Naive thymus-derived CD4-positive, alpha-beta T cell (primary cell): ENCODE measurements at regions of chr1 and their contacts with region 1.

Region 1: GRCh38 chr1:154479764-154480421 is 22.1 kb upstream of the TDRD10 start:
- DNase-seq: peak in 8 of 9 donors; percentile 39 to 78 (median 66)
- ATAC-seq: peak; percentile 90
- H3K4me3 ChIP-seq: no peak overlapping the region
- H3K4me3 Mint-ChIP-seq: no peak overlapping the region
- H3K27ac ChIP-seq: no peak overlapping the region
- H3K27ac Mint-ChIP-seq: peak overlapping the region in 1 of 9 donors; percentile 0
- H3K4me1 ChIP-seq: peaks cover 0 to 10% of the 10 kb centered on the region in 2 donors
- H3K4me1 Mint-ChIP-seq: peaks cover 12 to 27% (median 19%) of the 10 kb centered on the region in 7 donors
- H3K27me3 ChIP-seq: no peaks in the 10 kb centered on the region
- H3K27me3 Mint-ChIP-seq: peaks cover 0 to 14% (median 0%) of the 10 kb centered on the region in 5 donors

Region 2: DNA sequence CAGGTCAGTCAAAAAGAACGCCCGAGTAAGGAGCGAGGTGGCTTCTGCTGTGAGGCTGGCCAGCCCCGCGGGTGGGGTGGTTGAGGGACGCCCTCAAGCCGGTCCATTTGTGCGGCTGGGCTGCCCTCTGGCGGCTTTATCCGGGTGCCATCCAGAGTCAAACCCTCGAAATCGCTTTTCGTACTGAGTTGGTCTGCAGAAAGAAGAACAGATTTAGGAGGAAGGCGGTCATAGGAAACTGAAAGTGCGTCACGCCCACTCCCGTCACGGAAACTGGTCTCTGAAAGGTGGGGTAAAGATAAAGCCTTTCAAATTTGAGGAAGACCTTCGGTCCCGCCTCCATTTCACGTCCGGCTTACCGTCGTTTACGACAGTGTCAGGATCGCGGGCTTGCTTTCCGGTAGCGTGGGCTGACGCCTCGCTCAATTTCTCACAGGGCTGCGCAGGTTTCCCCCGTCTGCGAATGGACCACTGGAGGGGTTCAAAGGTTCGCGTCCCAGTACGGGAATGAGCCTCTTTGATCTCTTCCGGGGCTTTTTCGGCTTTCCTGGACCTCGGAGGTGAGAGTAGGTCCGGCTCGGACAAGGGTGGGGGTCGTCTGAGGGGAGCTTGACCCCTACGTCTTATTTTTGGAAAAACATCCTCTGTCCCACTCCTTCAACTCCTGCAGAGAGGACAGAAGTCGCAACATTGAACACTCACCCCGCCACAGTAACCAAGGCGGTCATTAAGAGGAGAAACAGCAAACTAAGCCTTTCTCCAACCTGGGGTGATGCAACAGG is 207.5 kb before region 1 on chr1 and contains the start of gene HAX1:
- CTCF ChIA-PET with region 1: no interaction called
- POLR2A ChIA-PET with region 1: no interaction called
- intact Hi-C with region 1: loop called (anchors 1 kb)
- DNase-seq: peak; percentile 74 to 99 (median 97)
- ATAC-seq: peak; percentile 95
- H3K4me3 ChIP-seq: peak within 1 kb of the TSS; percentile 98
- H3K4me3 Mint-ChIP-seq: peak within 1 kb of the TSS; percentile 94 to 99 (median 97)
- H3K27ac ChIP-seq: peak within 1 kb of the TSS; percentile 92
- H3K27ac Mint-ChIP-seq: peak within 1 kb of the TSS; percentile 97 to 99 (median 99)
- H3K4me1 ChIP-seq: peaks cover 10 to 20% of the 10 kb centered on the region in 2 donors
- H3K4me1 Mint-ChIP-seq: peaks cover 20 to 47% (median 42%) of the 10 kb centered on the region in 7 donors
- H3K27me3 ChIP-seq: no peaks in the 10 kb centered on the region
- H3K27me3 Mint-ChIP-seq: no peaks in the 10 kb centered on the region
- total RNA-seq, gene HAX1: 71.9 to 111 (median 104) TPM

Region 3: GRCh38 chr1:154352581-154353459 is 127.1 kb before region 1 on chr1:
- CTCF ChIA-PET with region 1: interaction called, 12 read pairs
- POLR2A ChIA-PET with region 1: interaction called, 7 read pairs
- intact Hi-C with region 1: loop called (anchors 1 to 5 kb)
- DNase-seq: peak in 8 of 9 donors; percentile 45 to 58 (median 52)
- ATAC-seq: peak; percentile 84
- H3K4me3 ChIP-seq: peak overlapping the region; percentile 79
- H3K4me3 Mint-ChIP-seq: peak overlapping the region; percentile 76 to 98 (median 91)
- H3K27ac ChIP-seq: peak overlapping the region; percentile 74
- H3K27ac Mint-ChIP-seq: peak overlapping the region; percentile 66 to 97 (median 88)
- H3K4me1 ChIP-seq: peaks cover 13 to 32% of the 10 kb centered on the region in 2 donors
- H3K4me1 Mint-ChIP-seq: peaks cover 29 to 64% (median 48%) of the 10 kb centered on the region in 7 donors
- H3K27me3 ChIP-seq: no peaks in the 10 kb centered on the region
- H3K27me3 Mint-ChIP-seq: peaks cover 0 to 2% (median 0%) of the 10 kb centered on the region in 5 donors

Region 4: DNA sequence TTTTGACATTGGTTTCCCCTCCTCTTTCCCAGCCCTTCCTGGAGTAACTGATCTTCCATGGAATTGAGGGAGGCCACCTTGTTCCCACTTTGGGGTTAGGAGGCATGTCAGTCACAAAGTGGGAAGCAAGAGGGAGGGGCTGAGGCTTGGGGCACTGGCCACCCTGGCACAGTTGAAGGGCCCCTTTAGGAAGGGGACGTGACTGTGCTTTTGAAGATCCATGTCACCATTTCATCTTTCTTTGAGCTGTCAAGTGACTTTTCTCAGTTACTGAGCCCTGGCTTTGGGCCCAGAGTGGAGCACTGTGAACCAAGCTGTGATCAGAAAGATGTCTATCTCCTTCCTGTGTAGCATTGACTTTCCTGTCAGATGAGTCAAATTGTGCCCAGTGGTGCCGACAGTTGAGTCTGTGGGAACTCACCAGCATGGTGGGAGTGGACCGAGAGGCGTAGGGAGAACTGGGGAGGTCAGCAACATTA is 16.3 kb before region 1 on chr1:
- CTCF ChIA-PET with region 1: interaction called, 7 read pairs
- POLR2A ChIA-PET with region 1: interaction called, 3 read pairs
- intact Hi-C with region 1: loop called in 1 of 2 experiments (anchors 1 kb)
- DNase-seq: peak in 8 of 9 donors; percentile 50 to 79 (median 70)
- ATAC-seq: peak; percentile 82
- H3K4me3 ChIP-seq: no peak overlapping the region
- H3K4me3 Mint-ChIP-seq: peak overlapping the region; percentile 58 to 96 (median 80)
- H3K27ac ChIP-seq: peak overlapping the region; percentile 78
- H3K27ac Mint-ChIP-seq: peak overlapping the region; percentile 86 to 96 (median 94)
- H3K4me1 ChIP-seq: peaks cover 38 to 78% of the 10 kb centered on the region in 2 donors
- H3K4me1 Mint-ChIP-seq: peaks cover 58 to 94% (median 81%) of the 10 kb centered on the region in 7 donors
- H3K27me3 ChIP-seq: no peaks in the 10 kb centered on the region
- H3K27me3 Mint-ChIP-seq: no peaks in the 10 kb centered on the region

Region 5: GRCh38 chr1:154524881-154525280 is 45.0 kb after region 1 on chr1:
- CTCF ChIA-PET with region 1: no interaction called
- POLR2A ChIA-PET with region 1: no interaction called
- intact Hi-C with region 1: no loop called
- DNase-seq: no peak
- ATAC-seq: no peak
- H3K4me3 ChIP-seq: no peak overlapping the region
- H3K4me3 Mint-ChIP-seq: no peak overlapping the region
- H3K27ac ChIP-seq: no peak overlapping the region
- H3K27ac Mint-ChIP-seq: no peak overlapping the region
- H3K4me1 ChIP-seq: no peaks in the 10 kb centered on the region
- H3K4me1 Mint-ChIP-seq: no peaks in the 10 kb centered on the region
- H3K27me3 ChIP-seq: no peaks in the 10 kb centered on the region
- H3K27me3 Mint-ChIP-seq: peaks cover 0 to 30% (median 7%) of the 10 kb centered on the region in 5 donors

Region 6: GRCh38 chr1:154669464-154670282 is 189.8 kb after region 1 on chr1:
- CTCF ChIA-PET with region 1: interaction called, 4 read pairs
- POLR2A ChIA-PET with region 1: no interaction called
- intact Hi-C with region 1: loop called in 1 of 2 experiments (anchors 1 kb)
- DNase-seq: peak; percentile 40 to 81 (median 73)
- ATAC-seq: peak; percentile 100
- H3K4me3 ChIP-seq: no peak overlapping the region
- H3K4me3 Mint-ChIP-seq: no peak overlapping the region
- H3K27ac ChIP-seq: no peak overlapping the region
- H3K27ac Mint-ChIP-seq: peak overlapping the region in 1 of 9 donors; percentile 30
- H3K4me1 ChIP-seq: no peaks in the 10 kb centered on the region
- H3K4me1 Mint-ChIP-seq: peaks cover 0 to 13% (median 5%) of the 10 kb centered on the region in 7 donors
- H3K27me3 ChIP-seq: no peaks in the 10 kb centered on the region
- H3K27me3 Mint-ChIP-seq: peaks cover 0 to 4% (median 0%) of the 10 kb centered on the region in 5 donors

Region 7: DNA sequence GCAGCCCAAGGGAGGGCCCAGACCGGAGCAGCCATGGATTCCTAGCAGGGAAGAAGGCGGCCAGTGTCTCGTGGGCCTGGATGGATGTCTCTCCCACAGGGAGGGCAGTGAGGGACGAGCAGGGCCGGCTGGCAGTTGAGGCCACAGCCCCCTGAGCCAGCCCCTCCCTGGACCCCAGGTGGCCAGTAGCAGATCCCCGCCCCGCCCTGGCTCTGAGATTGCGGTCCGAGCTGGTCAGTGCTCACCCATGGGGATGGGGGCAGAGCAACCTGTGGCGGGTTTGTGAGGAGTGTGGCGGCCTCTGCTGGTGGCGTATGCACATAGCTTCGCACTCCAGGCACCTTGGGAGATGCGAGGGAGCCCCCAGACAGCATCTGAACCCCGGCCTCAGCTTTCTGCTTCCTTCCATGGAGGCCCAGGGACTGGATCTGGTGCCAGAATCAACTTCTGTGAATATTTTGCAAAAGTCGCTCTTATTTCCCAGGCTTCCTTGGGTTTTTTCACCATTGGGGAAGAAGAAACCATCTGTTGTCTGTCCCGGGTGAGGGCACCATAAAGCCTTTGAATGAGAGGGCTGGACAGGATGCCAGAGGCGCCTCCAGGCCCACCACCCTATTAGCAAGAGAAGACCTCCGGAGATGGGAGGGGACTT is 398.6 kb after region 1 on chr1:
- CTCF ChIA-PET with region 1: interaction called, 7 read pairs
- POLR2A ChIA-PET with region 1: no interaction called
- intact Hi-C with region 1: loop called in 1 of 2 experiments (anchors 1 kb)
- DNase-seq: peak; percentile 43 to 73 (median 60)
- ATAC-seq: peak; percentile 94
- H3K4me3 ChIP-seq: no peak overlapping the region
- H3K4me3 Mint-ChIP-seq: no peak overlapping the region
- H3K27ac ChIP-seq: no peak overlapping the region
- H3K27ac Mint-ChIP-seq: peak overlapping the region in 1 of 9 donors; percentile 56
- H3K4me1 ChIP-seq: no peaks in the 10 kb centered on the region
- H3K4me1 Mint-ChIP-seq: peaks cover 0 to 8% (median 0%) of the 10 kb centered on the region in 7 donors
- H3K27me3 ChIP-seq: no peaks in the 10 kb centered on the region
- H3K27me3 Mint-ChIP-seq: peaks cover 0 to 2% (median 0%) of the 10 kb centered on the region in 5 donors

Region 8: GRCh38 chr1:155084722-155085503 is 605.0 kb after region 1 on chr1:
- CTCF ChIA-PET with region 1: interaction called, 5 read pairs
- POLR2A ChIA-PET with region 1: no interaction called
- intact Hi-C with region 1: loop called in 1 of 2 experiments (anchors 10 kb)
- DNase-seq: peak; percentile 87 to 96 (median 93)
- ATAC-seq: peak; percentile 86
- H3K4me3 ChIP-seq: peak overlapping the region; percentile 97
- H3K4me3 Mint-ChIP-seq: peak overlapping the region; percentile 88 to 100 (median 94)
- H3K27ac ChIP-seq: peak overlapping the region; percentile 63
- H3K27ac Mint-ChIP-seq: peak overlapping the region; percentile 88 to 98 (median 93)
- H3K4me1 ChIP-seq: peaks cover 51 to 53% of the 10 kb centered on the region in 2 donors
- H3K4me1 Mint-ChIP-seq: peaks cover 24 to 43% (median 41%) of the 10 kb centered on the region in 7 donors
- H3K27me3 ChIP-seq: peaks cover 28 to 31% of the 10 kb centered on the region in 2 donors
- H3K27me3 Mint-ChIP-seq: peaks cover 17 to 41% (median 23%) of the 10 kb centered on the region in 5 donors